Posterior vena cava (tissue), 2 donors: ENCODE measurements at regions of chr1 and their contacts with region 1.

Region 1: GRCh38 chr1:165914136-165914798 is 86.9 kb downstream of the UCK2 start:
- DNase-seq: no peak

Region 2: DNA sequence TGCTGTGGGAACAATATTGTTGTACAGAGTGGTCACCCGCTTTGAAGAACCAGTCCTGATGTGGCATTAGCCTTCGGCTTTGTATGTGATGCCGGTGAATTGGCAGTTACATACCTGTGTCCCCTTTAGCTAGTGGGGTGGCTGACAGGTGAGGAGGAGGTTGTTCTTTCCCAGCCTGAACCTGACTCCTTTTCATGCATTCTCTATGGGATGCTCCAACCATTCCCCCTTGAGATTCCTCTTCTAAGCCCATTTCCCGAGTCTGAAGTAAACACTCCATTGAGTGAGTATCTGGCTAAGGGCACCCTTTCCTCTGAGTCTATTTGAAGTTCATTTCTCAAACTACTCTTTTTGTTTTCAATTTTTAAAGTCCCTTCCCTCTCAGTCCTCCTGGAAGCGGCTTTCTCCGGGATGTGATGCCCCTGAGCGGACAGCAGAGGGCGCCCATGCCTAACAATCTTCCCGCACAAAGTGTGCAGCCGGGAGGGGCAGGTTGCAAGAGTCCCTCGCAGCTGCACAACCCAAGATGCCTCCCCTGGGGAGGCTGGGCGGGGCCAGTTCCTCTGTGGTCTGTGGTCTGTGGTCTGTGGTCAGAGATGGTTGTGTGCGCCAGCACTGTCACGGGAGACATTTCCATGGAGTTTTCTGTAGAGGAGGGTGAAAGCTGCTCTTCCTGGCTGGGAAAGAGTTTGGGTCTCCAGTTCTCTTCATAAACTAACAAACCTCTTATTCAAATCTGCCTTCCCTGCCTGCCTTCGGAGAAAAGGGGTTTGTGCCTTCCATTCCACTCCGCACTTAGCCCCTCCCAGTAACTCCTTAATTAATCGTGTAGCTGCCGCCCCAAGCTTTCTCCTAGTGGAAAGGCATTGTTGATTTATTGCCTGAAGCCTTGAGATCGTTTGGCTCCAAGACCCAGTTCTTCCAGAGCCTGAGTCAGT is 521.4 kb before region 1 on chr1:
- intact Hi-C with region 1: loop called (anchors 5 to 10 kb)
- DNase-seq: peak; percentile 96

Region 3: GRCh38 chr1:165397944-165398343 is 516.3 kb before region 1 on chr1:
- intact Hi-C with region 1: loop called (anchors 5 to 10 kb)
- DNase-seq: peak; percentile 84

Region 4: DNA sequence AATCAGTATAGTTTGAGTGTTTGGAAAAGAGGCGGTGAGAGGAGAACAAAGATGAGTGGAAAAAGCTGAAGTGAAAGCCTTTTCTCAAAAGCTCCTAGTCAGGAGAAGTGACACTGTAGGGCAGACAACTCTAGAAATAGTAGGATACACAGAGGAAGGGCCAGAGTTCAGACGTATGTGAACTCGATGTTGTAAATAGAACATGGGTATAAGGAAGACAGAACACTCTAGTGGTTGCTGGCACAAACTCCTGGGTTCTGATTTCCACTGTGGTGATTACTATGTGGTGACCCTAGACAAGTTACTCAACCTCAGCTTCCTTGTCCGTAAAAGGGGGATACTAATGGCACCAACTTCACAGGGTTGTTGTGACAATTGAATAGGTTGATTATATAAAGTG is 313.5 kb before region 1 on chr1:
- intact Hi-C with region 1: loop called (anchors 5 kb)
- DNase-seq: no peak

Region 5: DNA sequence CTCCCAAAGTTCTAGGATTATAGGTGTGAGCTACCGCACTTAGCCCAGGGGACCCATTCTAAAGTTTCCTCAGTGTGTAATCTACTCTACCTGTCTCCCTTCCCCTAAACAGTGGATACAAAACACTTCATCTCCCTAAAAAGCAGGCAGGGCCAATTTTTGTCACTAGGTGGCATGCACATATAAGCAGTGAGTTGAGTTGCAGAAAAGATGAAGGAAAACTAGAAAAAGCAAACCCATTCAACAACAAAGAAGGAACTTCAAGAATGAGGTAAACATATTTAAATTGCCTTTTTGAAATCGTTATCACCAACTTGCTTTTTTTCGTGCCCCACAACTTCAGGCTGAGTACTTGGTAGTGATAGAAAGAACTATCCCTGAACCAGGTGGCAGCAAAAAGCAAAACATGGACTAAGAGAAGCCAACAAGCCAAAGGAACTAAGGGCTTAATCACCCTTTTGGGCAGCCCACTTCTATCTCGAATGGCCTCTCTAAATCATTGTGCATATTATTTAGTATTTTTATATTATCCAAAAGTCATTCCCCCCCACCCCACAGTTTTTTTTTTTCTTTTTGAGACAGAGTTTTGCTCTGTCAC is 196.2 kb before region 1 on chr1:
- intact Hi-C with region 1: loop called in 1 of 2 experiments (anchors 10 kb)
- DNase-seq: no peak